RWPE1 (cell line): ENCODE measurements at regions of chr11 and their contacts with region 1.

Region 1: GRCh38 chr11:20609727-20610707 is 10.6 kb downstream of the SLC6A5 start:
- DNase-seq: peak; percentile 75
- H3K27ac ChIP-seq: no peak overlapping the region
- CTCF ChIP-seq: peak; percentile 95

Region 2: GRCh38 chr11:20397281-20397680 is 212.7 kb before region 1 on chr11:
- CTCF ChIA-PET with region 1: interaction called, 10 read pairs
- POLR2A ChIA-PET with region 1: no interaction called
- DNase-seq: peak; percentile 26
- H3K27ac ChIP-seq: no peak overlapping the region
- CTCF ChIP-seq: peak; percentile 49

Region 3: GRCh38 chr11:20599221-20600019 is 10.6 kb before region 1 on chr11 and contains the start of gene SLC6A5:
- CTCF ChIA-PET with region 1: interaction called, 14 read pairs
- POLR2A ChIA-PET with region 1: no interaction called
- DNase-seq: peak; percentile 60
- H3K27ac ChIP-seq: no peak within 1 kb of the TSS
- CTCF ChIP-seq: no peak